ENCODE measurements at regions of chr11 and their contacts with region 1.

Region 1: GRCh38 chr11:10441652-10442503 is 13.2 kb upstream of the AMPD3 start:
- DNase-seq: peak; percentile 66
- ATAC-seq: peak; percentile 75
- H3K4me3 Mint-ChIP-seq: no peak overlapping the region
- H3K27ac Mint-ChIP-seq: peak overlapping the region; percentile 47
- H3K4me1 Mint-ChIP-seq: peaks cover 45% of the 10 kb centered on the region
- H3K27me3 Mint-ChIP-seq: no peaks in the 10 kb centered on the region
- CTCF ChIP-seq: no peak

Region 2: DNA sequence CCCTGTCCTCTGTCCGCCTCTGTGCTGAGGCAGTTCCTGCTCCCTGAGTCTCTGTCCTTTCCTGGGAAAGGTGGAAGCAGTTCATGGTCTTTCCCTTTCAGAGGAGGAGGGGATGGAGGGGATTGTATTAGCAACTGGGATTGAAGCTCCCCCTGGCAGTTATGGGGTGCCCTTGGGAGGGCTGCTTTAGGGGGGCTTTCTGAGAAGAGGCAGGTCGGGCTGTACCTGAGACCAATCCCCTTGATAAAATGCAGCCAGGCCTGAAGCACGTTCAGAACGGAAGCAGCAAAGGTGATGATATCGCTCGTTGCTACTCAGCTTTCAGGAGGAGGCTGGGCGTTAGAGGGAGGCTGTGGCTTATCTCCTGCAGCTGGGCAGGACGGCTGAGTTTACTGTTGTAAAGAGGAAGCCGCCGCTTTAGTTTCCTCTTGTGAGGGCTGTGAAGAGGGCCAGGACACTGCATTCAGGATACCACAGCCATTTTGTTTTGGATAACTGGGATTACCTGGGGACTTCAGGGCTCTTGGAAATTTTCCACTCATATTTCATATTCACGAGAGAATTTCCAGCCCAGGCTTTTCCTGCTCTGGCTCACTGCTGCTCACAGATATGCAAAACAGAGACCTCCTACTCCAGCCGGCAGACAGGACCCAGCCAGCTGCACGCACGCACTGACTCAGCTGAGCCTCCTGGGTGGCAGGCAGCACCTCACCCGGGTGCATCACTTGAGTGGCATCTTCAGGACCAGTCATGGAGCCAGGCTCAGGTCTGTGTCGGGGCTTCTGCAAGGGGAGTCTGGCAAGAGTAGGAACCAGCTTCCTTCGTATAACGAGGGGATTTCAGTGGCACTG is 14.0 kb after region 1 on chr11:
- CTCF ChIA-PET with region 1: interaction called, 8 read pairs
- POLR2A ChIA-PET with region 1: interaction called, 30 read pairs
- intact Hi-C with region 1: no loop called
- DNase-seq: peak; percentile 89
- ATAC-seq: peak; percentile 70
- H3K4me3 Mint-ChIP-seq: peak overlapping the region; percentile 91
- H3K27ac Mint-ChIP-seq: peak overlapping the region; percentile 97
- H3K4me1 Mint-ChIP-seq: peaks cover 81% of the 10 kb centered on the region
- H3K27me3 Mint-ChIP-seq: no peaks in the 10 kb centered on the region
- CTCF ChIP-seq: no peak

Measured in activated CD8-positive, alpha-beta T cell treated with anti-CD3 and anti-CD28 coated beads for 36 hours (primary cell).